ENCODE measurements at regions of chrX and their contacts with region 1.

Region 1: DNA sequence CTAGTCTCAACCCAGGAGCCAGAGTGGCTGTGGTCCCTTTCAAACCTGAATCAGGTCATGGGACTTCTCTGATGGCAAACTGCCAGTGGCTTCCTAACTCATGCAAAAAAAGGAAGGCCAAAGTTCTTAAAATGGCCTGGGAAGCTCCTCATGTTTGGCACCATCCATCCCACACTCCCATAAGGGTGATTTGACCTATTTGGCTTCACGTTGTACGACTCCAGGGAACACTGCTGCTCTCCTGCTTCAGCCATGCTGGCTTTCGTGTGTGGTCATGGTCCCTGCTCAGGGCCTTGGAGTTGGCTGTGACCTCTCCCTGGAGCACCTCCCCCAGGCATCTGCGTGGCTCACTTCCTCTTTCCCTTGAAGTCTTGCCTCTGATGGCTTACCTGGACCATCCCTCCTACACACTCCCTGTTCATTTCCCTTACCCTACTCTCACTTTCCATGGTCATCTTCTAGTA is 12.8 kb upstream of the TMSB4X start:
- DNase-seq: no peak
- H3K4me3 ChIP-seq: no peak overlapping the region
- H3K27ac ChIP-seq: no peak overlapping the region
- H3K4me1 ChIP-seq: no peaks in the 10 kb centered on the region
- H3K27me3 ChIP-seq: no peaks in the 10 kb centered on the region
- CTCF ChIP-seq: no peak
- POLR2A ChIP-seq: no peak

Region 2: GRCh38 chrX:13495232-13495631 is 533.2 kb after region 1 on chrX:
- intact Hi-C with region 1: loop called in 1 of 2 experiments (anchors 10 kb)
- DNase-seq: peak in 3 of 7 donors; percentile 17 to 51 (median 40)
- H3K4me3 ChIP-seq: no peak overlapping the region
- H3K27ac ChIP-seq: no peak overlapping the region
- H3K4me1 ChIP-seq: no peaks in the 10 kb centered on the region
- H3K27me3 ChIP-seq: peaks cover 14% of the 10 kb centered on the region
- CTCF ChIP-seq: no peak
- POLR2A ChIP-seq: no peak